ENCODE measurements at regions of chr1 and their contacts with region 1.

Region 1: DNA sequence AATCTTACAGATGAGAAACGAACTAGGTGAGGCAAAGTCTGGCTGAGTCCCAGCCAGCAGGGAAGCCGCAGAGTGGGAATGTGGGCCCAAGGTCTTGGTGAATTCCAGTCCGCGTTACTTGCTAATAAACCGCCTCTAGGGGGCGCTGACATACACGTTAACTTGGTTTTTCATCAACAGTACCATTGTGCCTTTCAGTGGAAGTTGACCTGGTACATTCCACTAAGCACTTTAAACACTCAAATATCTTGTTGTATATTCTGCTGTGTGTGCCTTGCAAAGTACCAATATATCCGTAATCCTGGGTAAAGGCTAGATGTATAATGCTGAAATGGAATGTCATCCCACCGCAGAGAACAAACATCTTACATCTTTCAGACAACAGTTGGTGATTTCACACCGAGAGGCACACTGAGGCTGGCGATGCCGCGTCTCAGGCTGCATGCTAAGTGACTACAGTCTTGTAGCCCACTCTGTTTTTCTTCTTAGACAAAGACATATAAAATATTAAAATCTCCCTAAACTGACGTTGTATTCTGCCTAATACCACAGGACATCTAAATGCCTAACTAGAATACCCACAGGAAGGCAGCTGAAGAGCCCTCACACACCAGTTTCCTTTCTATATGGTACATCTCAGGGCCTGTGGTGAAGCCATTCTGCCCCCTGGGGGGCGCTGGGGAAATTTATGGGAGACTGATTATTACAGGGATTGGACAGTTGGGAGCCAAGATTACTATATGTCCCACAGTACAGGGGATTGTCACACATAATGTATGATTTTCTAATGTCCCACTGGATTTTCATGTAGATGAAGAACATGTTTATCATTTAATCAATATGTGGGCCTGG is 49.2 kb upstream of the C1orf198 start:
- DNase-seq: peak; percentile 69
- CTCF ChIP-seq: peak; percentile 75

Region 2: GRCh38 chr1:230632273-230632873 is 285.1 kb before region 1 on chr1:
- CTCF ChIA-PET with region 1: no interaction called
- POLR2A ChIA-PET with region 1: no interaction called
- DNase-seq: no peak
- CTCF ChIP-seq: peak; percentile 56

Region 3: DNA sequence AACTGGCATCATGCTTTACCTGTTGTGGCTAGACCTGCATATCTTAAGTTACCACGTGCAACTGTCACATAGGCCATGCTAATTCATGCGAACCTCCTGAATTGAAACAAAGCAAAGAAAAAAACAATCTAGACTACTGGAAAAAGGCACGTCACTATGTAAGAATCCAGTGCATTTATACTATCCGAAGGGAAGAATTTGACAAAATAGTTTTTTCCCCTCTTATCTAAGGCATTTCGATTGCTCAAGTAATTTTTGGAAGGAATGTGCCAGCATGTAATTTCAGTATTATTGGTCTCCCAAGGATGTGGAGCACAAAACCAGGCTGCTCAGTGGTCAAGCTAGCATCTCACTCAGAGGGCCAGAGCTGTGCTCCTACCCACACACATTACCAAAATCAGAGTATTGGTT is 17.7 kb before region 1 on chr1:
- CTCF ChIA-PET with region 1: interaction called, 12 read pairs
- POLR2A ChIA-PET with region 1: no interaction called
- DNase-seq: no peak
- CTCF ChIP-seq: no peak

Region 4: DNA sequence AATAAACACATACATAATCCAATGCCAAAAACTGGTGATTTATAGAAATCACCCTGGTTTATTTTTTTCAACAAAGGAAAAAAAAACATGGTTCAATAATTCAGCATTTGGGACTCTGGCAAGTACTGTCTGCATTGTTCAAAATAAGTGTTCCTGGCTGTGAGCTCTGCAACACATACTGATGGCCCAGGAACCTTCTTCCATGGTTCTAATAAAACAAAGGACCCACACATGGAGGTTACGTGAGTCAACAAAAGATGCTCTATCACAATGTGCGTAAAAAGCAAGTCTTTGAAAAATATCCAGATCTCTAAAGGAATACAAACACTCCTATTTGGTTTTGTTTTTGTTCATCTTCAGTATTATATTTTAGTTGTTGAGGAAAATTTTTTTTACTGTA is 11.3 kb before region 1 on chr1:
- CTCF ChIA-PET with region 1: interaction called, 15 read pairs
- POLR2A ChIA-PET with region 1: no interaction called
- DNase-seq: no peak
- CTCF ChIP-seq: no peak

Region 5: DNA sequence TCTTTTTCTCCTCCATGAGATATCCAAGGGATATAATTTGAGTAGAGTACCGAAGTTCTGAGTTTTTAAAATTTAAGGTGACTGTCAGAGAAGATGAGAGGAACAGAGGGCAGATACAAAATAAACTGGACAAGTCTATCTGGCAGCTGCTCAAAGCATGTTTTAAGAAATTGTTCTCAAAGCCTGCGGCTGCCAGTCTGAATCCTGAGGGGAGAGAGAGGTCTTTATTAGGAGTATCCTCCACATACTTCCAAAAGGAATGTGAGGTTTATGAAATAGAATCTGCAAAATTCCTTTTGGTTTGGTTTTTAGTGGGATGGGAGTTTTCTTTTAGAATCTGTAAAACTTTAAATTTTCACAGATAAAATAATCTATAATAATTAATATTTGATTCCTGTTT is 19.9 kb after region 1 on chr1:
- CTCF ChIA-PET with region 1: interaction called, 20 read pairs
- POLR2A ChIA-PET with region 1: no interaction called
- DNase-seq: no peak
- CTCF ChIP-seq: no peak

Region 6: GRCh38 chr1:230970432-230970831 is 52.9 kb after region 1 on chr1:
- CTCF ChIA-PET with region 1: no interaction called
- POLR2A ChIA-PET with region 1: no interaction called
- DNase-seq: no peak
- CTCF ChIP-seq: no peak

Region 7: DNA sequence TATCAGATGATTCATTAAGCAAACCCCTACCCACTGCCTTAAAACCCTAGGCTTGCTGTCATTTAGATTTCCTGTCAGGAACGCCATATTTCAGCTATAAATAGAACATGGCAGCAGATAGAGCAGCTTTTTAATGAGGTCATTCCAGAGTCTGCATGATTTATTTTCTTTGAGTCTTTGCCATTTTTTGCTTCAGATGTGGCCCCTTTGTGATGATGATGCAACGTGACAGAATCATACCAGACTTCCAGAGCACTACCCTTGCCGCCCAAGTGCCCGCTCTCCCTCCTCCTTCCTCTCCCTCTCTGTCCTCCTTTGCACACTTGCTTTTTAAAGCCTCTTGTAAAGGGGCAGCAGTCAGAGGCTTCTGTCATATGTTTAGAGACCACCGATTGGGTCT is 188.8 kb after region 1 on chr1:
- CTCF ChIA-PET with region 1: no interaction called
- POLR2A ChIA-PET with region 1: no interaction called
- DNase-seq: no peak
- CTCF ChIP-seq: no peak

Region 8: GRCh38 chr1:231211005-231211857 is 293.7 kb after region 1 on chr1:
- CTCF ChIA-PET with region 1: interaction called, 14 read pairs
- POLR2A ChIA-PET with region 1: no interaction called
- DNase-seq: peak; percentile 92
- CTCF ChIP-seq: peak; percentile 89

Measured in GM10248 (cell line).